ENCODE measurements at regions of chr4 and their contacts with region 1.

Region 1: DNA sequence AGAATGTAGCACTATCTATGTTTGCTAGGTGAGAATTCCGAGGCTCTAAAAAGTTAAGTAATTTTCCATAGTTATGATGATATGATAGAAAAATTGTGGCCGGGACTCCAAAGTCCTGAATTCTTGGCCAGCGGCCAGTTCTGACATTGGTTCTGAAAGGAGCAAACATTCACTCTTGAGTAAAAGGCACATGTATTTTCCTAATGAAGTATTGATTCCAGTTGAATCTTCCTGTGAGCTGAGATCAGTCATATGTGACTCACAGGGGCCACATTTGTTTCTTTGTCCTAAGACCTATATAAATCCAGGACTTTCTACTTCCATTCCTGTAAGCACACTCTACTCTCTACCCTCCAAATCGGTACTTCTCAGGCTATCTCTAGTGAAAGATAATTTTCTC is 349.9 kb downstream of the BMPR1B start:
- DNase-seq: peak; percentile 36
- H3K4me3 Mint-ChIP-seq: no peak overlapping the region
- H3K27ac Mint-ChIP-seq: no peak overlapping the region
- H3K4me1 Mint-ChIP-seq: no peaks in the 10 kb centered on the region
- H3K27me3 Mint-ChIP-seq: no peaks in the 10 kb centered on the region
- CTCF ChIP-seq: no peak

Region 2: GRCh38 chr4:94641702-94642560 is 465.7 kb before region 1 on chr4:
- CTCF ChIA-PET with region 1: no interaction called
- intact Hi-C with region 1: loop called (anchors 10 kb)
- DNase-seq: no peak
- H3K4me3 Mint-ChIP-seq: no peak overlapping the region
- H3K27ac Mint-ChIP-seq: peak overlapping the region; percentile 91
- H3K4me1 Mint-ChIP-seq: peaks cover 31% of the 10 kb centered on the region
- H3K27me3 Mint-ChIP-seq: no peaks in the 10 kb centered on the region
- CTCF ChIP-seq: no peak

Region 3: DNA sequence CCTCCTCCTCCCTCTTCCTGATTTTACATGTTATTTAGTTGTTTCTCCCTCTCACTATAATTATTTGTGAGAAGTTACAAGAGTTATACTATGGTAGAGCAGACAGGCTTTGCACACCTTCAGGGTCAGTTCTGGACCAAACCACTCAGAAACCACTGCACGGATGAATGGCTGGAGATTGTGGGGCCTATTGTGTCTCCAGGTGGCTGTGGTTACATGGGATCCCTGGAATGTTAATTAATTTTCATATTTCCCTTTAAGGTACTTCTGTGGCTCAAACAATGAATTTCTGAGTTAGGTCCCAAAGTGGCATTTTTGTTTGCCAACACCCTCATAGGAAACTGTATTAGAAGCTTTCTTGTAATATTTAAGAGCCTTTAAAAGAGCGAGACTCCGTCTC is 198.0 kb before region 1 on chr4:
- CTCF ChIA-PET with region 1: no interaction called
- intact Hi-C with region 1: no loop called
- DNase-seq: no peak
- H3K4me3 Mint-ChIP-seq: no peak overlapping the region
- H3K27ac Mint-ChIP-seq: no peak overlapping the region
- H3K4me1 Mint-ChIP-seq: no peaks in the 10 kb centered on the region
- H3K27me3 Mint-ChIP-seq: no peaks in the 10 kb centered on the region
- CTCF ChIP-seq: no peak

Region 4: GRCh38 chr4:95204873-95205272 is 97.2 kb after region 1 on chr4:
- CTCF ChIA-PET with region 1: no interaction called
- intact Hi-C with region 1: no loop called
- DNase-seq: peak; percentile 31
- H3K4me3 Mint-ChIP-seq: no peak overlapping the region
- H3K27ac Mint-ChIP-seq: no peak overlapping the region
- H3K4me1 Mint-ChIP-seq: no peaks in the 10 kb centered on the region
- H3K27me3 Mint-ChIP-seq: no peaks in the 10 kb centered on the region
- CTCF ChIP-seq: peak; percentile 19